Heart left ventricle (tissue), 16 donors: ENCODE measurements at regions of chr1 and their contacts with region 1.

Region 1: DNA sequence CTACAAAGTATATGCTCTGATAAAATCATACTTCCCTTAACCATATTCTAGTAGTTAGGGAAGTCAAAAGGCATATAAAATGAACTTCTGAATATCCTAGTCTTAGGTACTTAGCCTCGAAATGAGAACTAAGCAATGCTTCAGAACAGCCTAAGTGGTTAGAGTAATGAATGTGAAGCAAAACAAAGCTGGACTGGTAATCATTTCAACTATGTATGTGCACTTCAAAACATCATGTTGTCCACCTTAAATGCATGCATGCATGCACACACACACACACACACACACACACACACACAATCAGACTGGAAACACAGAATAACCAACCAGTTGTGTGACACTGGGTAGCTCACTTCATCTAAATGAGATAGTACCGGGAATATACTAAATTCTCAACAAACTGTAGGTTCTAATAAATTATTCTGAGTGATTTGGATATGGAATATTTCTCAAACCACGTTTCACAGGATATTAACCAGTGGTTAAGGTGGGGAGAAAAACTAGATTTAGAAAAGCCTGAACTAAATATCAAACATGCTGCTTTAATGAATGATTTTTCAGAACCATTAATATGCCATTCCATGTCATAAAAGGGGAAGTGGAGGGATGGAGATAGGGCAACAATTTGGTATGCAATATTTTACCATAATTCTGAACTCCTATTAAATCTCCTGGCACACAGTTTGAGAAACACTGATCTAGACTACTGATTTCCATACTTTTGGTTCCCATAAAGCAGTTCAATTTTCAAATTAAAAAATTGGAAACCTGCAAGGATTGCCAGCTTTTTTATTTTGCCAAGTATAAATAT is 19.5 kb downstream of the RNF115 start:
- DNase-seq: no peak
- ATAC-seq: peak in 1 of 4 donors; percentile 27
- H3K4me3 ChIP-seq: no peak overlapping the region
- H3K27ac ChIP-seq: no peak overlapping the region
- H3K4me1 ChIP-seq: peaks cover 2 to 65% (median 35%) of the 10 kb centered on the region in 12 donors
- H3K27me3 ChIP-seq: no peaks in the 10 kb centered on the region
- CTCF ChIP-seq: no peak
- POLR2A ChIP-seq: no peak

Region 2: DNA sequence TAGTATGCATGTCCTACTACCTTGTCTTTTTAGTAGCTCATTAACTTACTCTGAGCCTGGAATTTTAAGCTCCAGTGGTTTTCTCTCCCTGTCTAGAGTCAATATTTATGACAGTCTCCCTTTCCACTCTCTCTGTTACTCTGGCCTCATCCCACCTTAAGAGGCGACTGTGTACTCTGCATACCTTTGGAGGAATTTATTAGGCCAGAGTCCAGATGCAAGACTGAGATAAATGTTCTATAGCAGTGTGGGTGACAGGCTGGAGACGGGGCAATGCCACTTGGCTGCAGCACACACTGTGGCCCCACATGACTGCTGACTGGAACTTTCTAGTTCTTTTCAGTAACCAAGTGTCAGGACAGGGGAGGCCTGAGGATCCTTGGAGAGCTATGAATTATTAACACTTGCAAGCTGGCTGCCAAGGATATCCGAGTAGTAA is 93.2 kb before region 1 on chr1:
- intact Hi-C with region 1: no loop called
- DNase-seq: no peak
- ATAC-seq: no peak
- H3K4me3 ChIP-seq: no peak overlapping the region
- H3K27ac ChIP-seq: no peak overlapping the region
- H3K4me1 ChIP-seq: peaks cover 0 to 9% (median 0%) of the 10 kb centered on the region in 12 donors
- H3K27me3 ChIP-seq: no peaks in the 10 kb centered on the region
- CTCF ChIP-seq: no peak
- POLR2A ChIP-seq: no peak

Region 3: DNA sequence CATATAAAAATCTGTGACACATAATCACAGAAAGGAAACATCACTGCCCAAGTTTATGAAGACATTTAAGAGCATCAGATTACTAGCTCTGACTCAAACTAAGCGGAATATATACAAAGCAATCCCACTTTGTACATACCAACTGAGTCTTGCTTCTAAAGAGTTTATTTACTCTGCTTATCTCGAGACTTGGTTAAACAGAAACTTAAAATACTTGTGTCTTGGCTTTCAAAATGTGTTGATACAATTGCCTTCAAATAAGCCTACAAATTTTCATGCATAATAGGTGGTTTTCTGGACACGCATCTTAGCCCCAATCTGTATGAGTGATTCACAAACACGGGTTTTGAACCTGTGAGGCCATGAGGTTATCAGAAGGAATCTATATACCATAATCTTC is 64.2 kb before region 1 on chr1:
- intact Hi-C with region 1: loop called in 1 of 10 experiments (anchors 10 kb)
- DNase-seq: no peak
- ATAC-seq: no peak
- H3K4me3 ChIP-seq: no peak overlapping the region
- H3K27ac ChIP-seq: no peak overlapping the region
- H3K4me1 ChIP-seq: no peaks in the 10 kb centered on the region
- H3K27me3 ChIP-seq: no peaks in the 10 kb centered on the region
- CTCF ChIP-seq: no peak
- POLR2A ChIP-seq: no peak

Region 4: GRCh38 chr1:145751491-145752037 is 52.9 kb before region 1 on chr1:
- intact Hi-C with region 1: loop called in 2 of 10 experiments (anchors 2 to 10 kb)
- DNase-seq: no peak
- ATAC-seq: peak in 1 of 4 donors; percentile 28
- H3K4me3 ChIP-seq: no peak overlapping the region
- H3K27ac ChIP-seq: peak overlapping the region in 1 of 12 donors; percentile 19
- H3K4me1 ChIP-seq: peaks cover 0 to 8% (median 0%) of the 10 kb centered on the region in 12 donors
- H3K27me3 ChIP-seq: no peaks in the 10 kb centered on the region
- CTCF ChIP-seq: no peak
- POLR2A ChIP-seq: no peak

Region 5: GRCh38 chr1:146012737-146013403 is 208.4 kb after region 1 on chr1:
- intact Hi-C with region 1: no loop called
- DNase-seq: peak in 1 of 5 donors; percentile 46
- ATAC-seq: peak in 2 of 4 donors; percentile 31 to 54
- H3K4me3 ChIP-seq: no peak overlapping the region
- H3K27ac ChIP-seq: no peak overlapping the region
- H3K4me1 ChIP-seq: peaks cover 0 to 25% (median 7%) of the 10 kb centered on the region in 12 donors
- H3K27me3 ChIP-seq: no peaks in the 10 kb centered on the region
- CTCF ChIP-seq: peak; percentile 60 to 90 (median 84)
- POLR2A ChIP-seq: no peak